ENCODE measurements at regions of chr14 and their contacts with region 1.

Region 1: GRCh38 chr14:88667555-88668273 is 104.9 kb downstream of the ZC3H14 start:
- DNase-seq: peak in 4 of 5 donors; percentile 8 to 61 (median 46)
- H3K4me3 ChIP-seq: no peak overlapping the region
- H3K4me3 Mint-ChIP-seq: no peak overlapping the region
- H3K27ac ChIP-seq: no peak overlapping the region
- H3K27ac Mint-ChIP-seq: peak overlapping the region in 2 of 8 donors; percentile 7 to 55
- H3K4me1 ChIP-seq: no peaks in the 10 kb centered on the region
- H3K4me1 Mint-ChIP-seq: peaks cover 0 to 2% (median 0%) of the 10 kb centered on the region in 3 donors
- H3K27me3 ChIP-seq: no peaks in the 10 kb centered on the region
- H3K27me3 Mint-ChIP-seq: peaks cover 0 to 2% of the 10 kb centered on the region in 2 donors

Region 2: DNA sequence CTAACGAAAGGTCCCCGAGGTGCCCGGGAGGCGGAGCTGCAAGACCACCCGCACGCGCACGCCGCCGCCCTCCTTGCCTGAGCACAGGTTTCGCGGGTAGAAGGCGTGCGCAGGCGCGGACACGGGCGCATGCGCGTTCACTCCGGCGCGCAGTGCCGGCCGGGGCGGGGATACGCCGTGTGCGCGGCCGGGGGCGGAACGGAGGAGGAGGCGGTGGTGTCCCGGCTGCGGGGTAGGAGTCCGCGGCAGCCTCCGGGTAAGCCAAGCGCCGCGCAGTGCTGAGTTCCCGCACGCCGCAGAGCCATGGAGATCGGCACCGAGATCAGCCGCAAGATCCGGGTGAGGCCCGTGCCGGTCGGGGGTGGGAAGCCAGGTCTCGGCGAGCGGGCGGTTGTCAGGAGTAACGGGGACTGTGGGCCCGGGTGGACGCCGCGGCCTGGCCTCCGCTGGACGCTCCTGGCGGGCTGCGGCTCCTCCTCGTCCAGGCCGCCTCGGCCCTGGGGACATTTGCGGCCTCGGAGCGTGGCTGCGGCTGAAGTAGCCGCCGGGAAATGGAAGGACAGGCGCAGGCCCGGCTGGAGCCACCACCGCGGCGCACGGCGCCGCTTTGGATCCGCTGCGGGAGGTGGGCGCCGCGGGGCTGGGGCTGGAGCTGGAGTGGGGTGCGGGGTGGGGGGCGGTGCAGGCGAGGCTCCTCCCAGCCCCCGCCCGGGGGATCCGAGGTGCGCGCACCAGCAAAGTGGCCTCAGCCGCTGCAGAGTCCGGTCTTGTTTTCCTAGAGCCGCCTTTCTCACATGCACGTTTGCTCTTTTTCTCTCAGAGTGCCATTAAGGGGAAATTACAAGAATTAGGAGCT is 104.7 kb before region 1 on chr14 and contains the start of gene ZC3H14:
- CTCF ChIA-PET with region 1: no interaction called
- POLR2A ChIA-PET with region 1: no interaction called
- DNase-seq: peak; percentile 78 to 91 (median 88)
- H3K4me3 ChIP-seq: peak within 1 kb of the TSS; percentile 71
- H3K4me3 Mint-ChIP-seq: peak within 1 kb of the TSS; percentile 84 to 100 (median 91)
- H3K27ac ChIP-seq: peak within 1 kb of the TSS; percentile 62
- H3K27ac Mint-ChIP-seq: peak within 1 kb of the TSS in 7 of 8 donors; percentile 86 to 100 (median 92)
- H3K4me1 ChIP-seq: peaks cover 19% of the 10 kb centered on the region
- H3K4me1 Mint-ChIP-seq: peaks cover 31 to 46% (median 35%) of the 10 kb centered on the region in 3 donors
- H3K27me3 ChIP-seq: no peaks in the 10 kb centered on the region
- H3K27me3 Mint-ChIP-seq: peaks cover 3 to 5% of the 10 kb centered on the region in 2 donors
- total RNA-seq, gene ZC3H14: 50.3 to 56.4 TPM

Region 3: DNA sequence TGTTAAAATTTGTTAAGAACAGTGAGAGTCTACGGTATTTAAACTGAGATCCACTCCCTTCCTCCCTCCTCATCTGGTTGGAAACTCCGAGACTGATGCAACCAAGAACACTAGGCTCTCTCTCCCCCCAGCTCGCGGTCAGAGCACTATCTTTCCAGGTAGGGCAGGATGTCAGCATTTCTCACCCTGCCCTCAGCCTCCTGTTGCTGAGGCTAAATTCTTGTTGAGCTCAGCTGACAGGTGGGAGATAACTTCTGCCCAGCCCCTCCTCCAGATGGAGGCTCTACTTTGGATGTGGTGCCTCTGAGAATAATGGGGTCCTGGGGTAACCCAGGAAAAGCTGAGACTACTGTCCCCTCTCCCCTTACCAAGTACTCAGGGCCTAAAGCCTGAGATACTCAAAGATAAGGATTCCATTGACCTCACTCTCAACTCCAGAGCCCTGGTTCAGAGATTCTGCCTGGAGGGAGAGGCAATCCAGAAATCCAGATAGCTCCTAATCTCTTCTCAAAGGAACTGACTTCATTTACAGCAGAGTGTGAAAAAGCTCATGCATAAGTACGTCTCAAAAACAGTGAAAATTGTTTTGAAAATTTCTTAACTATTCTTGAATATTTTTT is 14.9 kb after region 1 on chr14:
- CTCF ChIA-PET with region 1: interaction called, 19 read pairs
- POLR2A ChIA-PET with region 1: no interaction called
- DNase-seq: no peak
- H3K4me3 ChIP-seq: no peak overlapping the region
- H3K4me3 Mint-ChIP-seq: no peak overlapping the region
- H3K27ac ChIP-seq: no peak overlapping the region
- H3K27ac Mint-ChIP-seq: no peak overlapping the region
- H3K4me1 ChIP-seq: no peaks in the 10 kb centered on the region
- H3K4me1 Mint-ChIP-seq: no peaks in the 10 kb centered on the region
- H3K27me3 ChIP-seq: no peaks in the 10 kb centered on the region
- H3K27me3 Mint-ChIP-seq: no peaks in the 10 kb centered on the region

Region 4: GRCh38 chr14:88786715-88787114 is 119.0 kb after region 1 on chr14:
- CTCF ChIA-PET with region 1: no interaction called
- POLR2A ChIA-PET with region 1: no interaction called
- DNase-seq: no peak
- H3K4me3 ChIP-seq: no peak overlapping the region
- H3K4me3 Mint-ChIP-seq: no peak overlapping the region
- H3K27ac ChIP-seq: no peak overlapping the region
- H3K27ac Mint-ChIP-seq: no peak overlapping the region
- H3K4me1 ChIP-seq: peaks cover 7% of the 10 kb centered on the region
- H3K4me1 Mint-ChIP-seq: peaks cover 13 to 21% (median 15%) of the 10 kb centered on the region in 3 donors
- H3K27me3 ChIP-seq: no peaks in the 10 kb centered on the region
- H3K27me3 Mint-ChIP-seq: peaks cover 11 to 23% of the 10 kb centered on the region in 2 donors